ENCODE measurements at regions of chr7 and their contacts with region 1.

Region 1: GRCh38 chr7:5694912-5695726 is 86.3 kb downstream of the RNF216 start:
- DNase-seq: peak; percentile 87
- ATAC-seq: peak; percentile 78
- H3K4me3 Mint-ChIP-seq: peak overlapping the region; percentile 84
- H3K27ac Mint-ChIP-seq: peak overlapping the region; percentile 96
- H3K4me1 Mint-ChIP-seq: peaks cover 98% of the 10 kb centered on the region
- H3K27me3 Mint-ChIP-seq: no peaks in the 10 kb centered on the region

Region 2: GRCh38 chr7:5406957-5407945 is 287.9 kb before region 1 on chr7:
- CTCF ChIA-PET with region 1: no interaction called
- POLR2A ChIA-PET with region 1: no interaction called
- intact Hi-C with region 1: no loop called
- DNase-seq: no peak
- ATAC-seq: no peak
- H3K4me3 Mint-ChIP-seq: no peak overlapping the region
- H3K27ac Mint-ChIP-seq: no peak overlapping the region
- H3K4me1 Mint-ChIP-seq: no peaks in the 10 kb centered on the region
- H3K27me3 Mint-ChIP-seq: peaks cover 7% of the 10 kb centered on the region

Region 3: GRCh38 chr7:5494683-5495561 is 200.2 kb before region 1 on chr7:
- CTCF ChIA-PET with region 1: interaction called, 18 read pairs
- POLR2A ChIA-PET with region 1: no interaction called
- intact Hi-C with region 1: no loop called
- DNase-seq: peak; percentile 90
- ATAC-seq: peak; percentile 91
- H3K4me3 Mint-ChIP-seq: no peak overlapping the region
- H3K27ac Mint-ChIP-seq: no peak overlapping the region
- H3K4me1 Mint-ChIP-seq: peaks cover 25% of the 10 kb centered on the region
- H3K27me3 Mint-ChIP-seq: no peaks in the 10 kb centered on the region

Region 4: DNA sequence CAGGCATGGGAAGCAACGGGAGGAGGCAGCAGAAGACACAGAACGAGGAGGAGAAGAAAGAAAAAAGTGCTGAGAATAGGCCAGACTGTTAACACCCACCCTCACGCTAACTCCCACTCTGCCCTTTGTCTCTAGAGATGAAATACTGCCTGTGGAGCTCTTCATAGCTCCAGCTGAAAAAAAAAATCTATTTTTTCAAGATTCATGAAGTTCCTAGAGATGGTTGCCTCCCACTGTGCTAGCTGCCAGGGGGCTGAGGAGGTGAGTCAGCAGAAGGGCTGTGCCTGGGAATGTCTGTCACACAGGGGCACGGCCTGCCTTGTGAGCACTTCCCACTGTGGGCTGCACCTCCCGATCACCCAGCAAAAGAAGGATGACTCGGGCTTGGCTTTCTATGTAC is 58.2 kb before region 1 on chr7:
- CTCF ChIA-PET with region 1: no interaction called
- POLR2A ChIA-PET with region 1: no interaction called
- intact Hi-C with region 1: loop called (anchors 2 to 5 kb)
- DNase-seq: no peak
- ATAC-seq: no peak
- H3K4me3 Mint-ChIP-seq: no peak overlapping the region
- H3K27ac Mint-ChIP-seq: peak overlapping the region; percentile 29
- H3K4me1 Mint-ChIP-seq: peaks cover 16% of the 10 kb centered on the region
- H3K27me3 Mint-ChIP-seq: no peaks in the 10 kb centered on the region

Region 5: DNA sequence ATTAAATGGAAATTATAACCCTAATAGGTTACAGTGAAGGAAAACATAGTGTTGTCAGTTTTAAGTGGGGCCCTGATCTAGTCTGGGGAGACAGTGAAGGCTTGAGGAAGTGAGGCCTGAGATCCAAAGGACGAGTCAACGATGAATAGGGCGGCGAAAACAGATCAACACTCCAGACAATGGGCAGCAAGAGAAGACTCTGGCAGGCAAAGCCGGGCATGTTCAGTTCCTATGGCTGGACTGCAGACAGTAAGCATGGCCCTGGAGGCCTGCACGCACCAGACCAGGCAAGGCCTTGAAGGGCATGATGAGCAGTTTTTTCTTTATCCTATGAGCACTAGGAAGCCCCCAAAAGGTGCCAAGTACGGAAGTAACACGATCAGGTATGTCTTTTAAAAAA is 41.5 kb before region 1 on chr7:
- CTCF ChIA-PET with region 1: no interaction called
- POLR2A ChIA-PET with region 1: no interaction called
- intact Hi-C with region 1: no loop called
- DNase-seq: no peak
- ATAC-seq: no peak
- H3K4me3 Mint-ChIP-seq: no peak overlapping the region
- H3K27ac Mint-ChIP-seq: peak overlapping the region; percentile 0
- H3K4me1 Mint-ChIP-seq: peaks cover 4% of the 10 kb centered on the region
- H3K27me3 Mint-ChIP-seq: no peaks in the 10 kb centered on the region

Region 6: GRCh38 chr7:5773661-5774086 is 78.6 kb after region 1 on chr7:
- CTCF ChIA-PET with region 1: interaction called, 3 read pairs
- POLR2A ChIA-PET with region 1: no interaction called
- intact Hi-C with region 1: loop called in 1 of 2 experiments (anchors 5 kb)
- DNase-seq: peak; percentile 76
- ATAC-seq: peak; percentile 69
- H3K4me3 Mint-ChIP-seq: peak overlapping the region; percentile 43
- H3K27ac Mint-ChIP-seq: peak overlapping the region; percentile 84
- H3K4me1 Mint-ChIP-seq: peaks cover 66% of the 10 kb centered on the region
- H3K27me3 Mint-ChIP-seq: no peaks in the 10 kb centered on the region

Region 7: DNA sequence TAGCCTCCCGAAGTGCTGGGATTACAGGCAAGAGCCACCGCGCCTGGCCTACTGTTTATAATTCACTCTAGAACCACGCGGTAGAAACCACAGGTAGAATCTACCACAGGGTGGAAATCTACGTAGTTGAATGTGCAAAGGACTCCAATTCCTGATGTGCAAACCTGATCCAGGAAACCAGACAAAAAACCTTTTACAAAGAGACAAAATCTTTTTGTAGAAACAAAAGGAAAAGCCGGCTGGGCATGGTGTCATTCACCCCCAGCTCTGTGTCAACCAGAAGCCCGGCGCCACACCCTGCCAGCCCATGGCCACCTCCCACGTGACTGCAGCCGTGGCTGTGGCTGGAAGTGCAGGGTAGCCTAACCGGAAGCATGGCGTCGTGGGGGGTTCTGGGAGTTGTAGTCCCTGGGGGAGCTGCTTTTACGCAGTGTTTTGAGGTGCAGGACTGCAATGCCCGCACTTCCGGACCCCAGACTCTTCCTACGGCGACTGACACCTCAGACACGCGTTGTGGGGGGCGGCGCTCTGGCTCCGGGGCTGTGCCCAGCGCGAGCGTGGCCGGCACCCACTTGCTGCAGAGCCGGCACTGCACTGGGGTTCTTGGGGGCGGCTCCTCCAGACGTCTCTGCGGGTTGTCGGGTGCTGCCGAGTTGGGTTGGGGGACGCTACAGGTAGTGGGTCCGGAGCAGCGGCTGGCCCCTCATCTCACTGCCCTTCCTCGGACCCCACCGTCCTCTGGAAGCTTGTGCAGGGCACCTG is 127.8 kb after region 1 on chr7:
- CTCF ChIA-PET with region 1: interaction called, 4 read pairs
- POLR2A ChIA-PET with region 1: no interaction called
- intact Hi-C with region 1: loop called in 1 of 2 experiments (anchors 5 kb)
- DNase-seq: peak; percentile 99
- ATAC-seq: peak; percentile 94
- H3K4me3 Mint-ChIP-seq: peak overlapping the region; percentile 74
- H3K27ac Mint-ChIP-seq: peak overlapping the region; percentile 89
- H3K4me1 Mint-ChIP-seq: peaks cover 29% of the 10 kb centered on the region
- H3K27me3 Mint-ChIP-seq: no peaks in the 10 kb centered on the region